ENCODE measurements at regions of chr4 and their contacts with region 1.

Region 1: GRCh38 chr4:163554870-163555465 is 60.5 kb downstream of the TMA16 start:
- DNase-seq: peak in 3 of 14 experiments; percentile 50 to 52 (median 52)
- ATAC-seq: no peak
- H3K4me3 ChIP-seq: no peak overlapping the region
- H3K4me3 Mint-ChIP-seq: no peak overlapping the region
- H3K27ac ChIP-seq: no peak overlapping the region
- H3K27ac Mint-ChIP-seq: no peak overlapping the region
- H3K4me1 ChIP-seq: peaks cover 22% of the 10 kb centered on the region
- H3K4me1 Mint-ChIP-seq: peaks cover 58% of the 10 kb centered on the region
- H3K27me3 ChIP-seq: no peaks in the 10 kb centered on the region
- H3K27me3 Mint-ChIP-seq: no peaks in the 10 kb centered on the region
- CTCF ChIP-seq: peak; percentile 94

Region 2: GRCh38 chr4:163582703-163583102 is 27.7 kb after region 1 on chr4:
- CTCF ChIA-PET with region 1: no interaction called
- POLR2A ChIA-PET with region 1: no interaction called
- intact Hi-C with region 1: loop called in 1 of 2 experiments (anchors 2 kb)
- DNase-seq: no peak
- ATAC-seq: no peak
- H3K4me3 ChIP-seq: no peak overlapping the region
- H3K4me3 Mint-ChIP-seq: no peak overlapping the region
- H3K27ac ChIP-seq: no peak overlapping the region
- H3K27ac Mint-ChIP-seq: no peak overlapping the region
- H3K4me1 ChIP-seq: no peaks in the 10 kb centered on the region
- H3K4me1 Mint-ChIP-seq: no peaks in the 10 kb centered on the region
- H3K27me3 ChIP-seq: no peaks in the 10 kb centered on the region
- H3K27me3 Mint-ChIP-seq: peaks cover 3% of the 10 kb centered on the region
- CTCF ChIP-seq: no peak

Region 3: DNA sequence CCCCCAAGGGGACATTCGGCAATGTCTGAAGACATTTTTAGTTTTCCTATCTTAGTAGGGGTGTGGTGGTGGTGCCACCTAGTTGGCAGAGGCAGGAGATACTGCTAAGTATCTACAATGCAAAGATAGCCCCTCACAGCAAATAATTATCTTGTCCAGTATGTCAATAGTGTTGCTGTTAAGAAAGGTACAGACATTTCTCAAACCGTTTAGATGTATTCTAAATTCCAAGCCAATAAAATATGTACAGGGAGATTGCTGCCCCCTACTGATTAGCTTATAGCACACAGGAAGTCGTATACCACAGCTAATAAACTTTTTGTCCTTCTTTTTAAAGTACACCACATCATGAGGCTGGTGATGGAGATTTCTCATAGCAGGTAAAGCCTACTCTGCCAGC is 200.0 kb after region 1 on chr4:
- CTCF ChIA-PET with region 1: interaction called, 5 read pairs
- POLR2A ChIA-PET with region 1: interaction called, 5 read pairs
- intact Hi-C with region 1: loop called (anchors 1 to 2 kb)
- DNase-seq: peak in 3 of 14 experiments; percentile 51 to 57 (median 52)
- ATAC-seq: peak; percentile 61
- H3K4me3 ChIP-seq: no peak overlapping the region
- H3K4me3 Mint-ChIP-seq: no peak overlapping the region
- H3K27ac ChIP-seq: no peak overlapping the region
- H3K27ac Mint-ChIP-seq: no peak overlapping the region
- H3K4me1 ChIP-seq: no peaks in the 10 kb centered on the region
- H3K4me1 Mint-ChIP-seq: peaks cover 9% of the 10 kb centered on the region
- H3K27me3 ChIP-seq: no peaks in the 10 kb centered on the region
- H3K27me3 Mint-ChIP-seq: peaks cover 7% of the 10 kb centered on the region
- CTCF ChIP-seq: peak; percentile 62

Region 4: DNA sequence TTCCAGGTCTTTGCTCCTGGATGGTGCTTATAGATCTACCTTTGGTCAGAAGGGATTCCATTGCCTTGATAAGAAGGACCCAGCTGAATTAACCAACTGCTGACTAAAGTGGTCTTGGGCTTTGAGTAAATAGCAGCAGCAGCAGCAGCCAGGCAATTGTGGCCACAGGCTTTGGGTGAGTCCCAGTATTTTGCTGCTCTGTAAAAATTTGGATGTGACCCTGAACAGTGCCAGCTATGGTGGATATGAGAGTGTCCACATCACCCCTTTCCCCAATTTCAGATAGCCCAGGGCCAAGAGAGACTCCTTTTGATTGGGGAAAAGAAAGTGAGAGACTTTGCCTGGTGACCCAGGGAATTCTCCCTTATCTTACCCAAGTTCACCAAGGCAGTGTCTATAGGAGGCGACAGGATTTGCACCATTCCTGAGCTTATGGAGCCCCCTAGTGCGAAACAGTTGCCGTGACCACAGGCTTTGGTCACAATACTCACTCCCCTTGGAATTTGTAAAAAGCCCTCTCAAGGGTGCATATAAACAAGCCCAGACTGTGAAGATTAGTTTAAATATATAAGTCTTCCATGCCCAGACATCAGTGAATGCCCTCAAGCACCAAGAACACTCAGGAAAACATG is 457.5 kb after region 1 on chr4:
- CTCF ChIA-PET with region 1: no interaction called
- POLR2A ChIA-PET with region 1: interaction called, 7 read pairs
- intact Hi-C with region 1: loop called (anchors 1 kb)
- DNase-seq: peak in 12 of 14 experiments; percentile 2 to 64 (median 14)
- ATAC-seq: peak; percentile 64
- H3K4me3 ChIP-seq: no peak overlapping the region
- H3K4me3 Mint-ChIP-seq: no peak overlapping the region
- H3K27ac ChIP-seq: no peak overlapping the region
- H3K27ac Mint-ChIP-seq: no peak overlapping the region
- H3K4me1 ChIP-seq: no peaks in the 10 kb centered on the region
- H3K4me1 Mint-ChIP-seq: peaks cover 21% of the 10 kb centered on the region
- H3K27me3 ChIP-seq: no peaks in the 10 kb centered on the region
- H3K27me3 Mint-ChIP-seq: no peaks in the 10 kb centered on the region
- CTCF ChIP-seq: peak; percentile 62

Region 5: GRCh38 chr4:164402554-164402953 is 847.6 kb after region 1 on chr4:
- CTCF ChIA-PET with region 1: no interaction called
- POLR2A ChIA-PET with region 1: no interaction called
- intact Hi-C with region 1: no loop called
- DNase-seq: no peak
- ATAC-seq: no peak
- H3K4me3 ChIP-seq: no peak overlapping the region
- H3K4me3 Mint-ChIP-seq: no peak overlapping the region
- H3K27ac ChIP-seq: no peak overlapping the region
- H3K27ac Mint-ChIP-seq: no peak overlapping the region
- H3K4me1 ChIP-seq: no peaks in the 10 kb centered on the region
- H3K4me1 Mint-ChIP-seq: no peaks in the 10 kb centered on the region
- H3K27me3 ChIP-seq: no peaks in the 10 kb centered on the region
- H3K27me3 Mint-ChIP-seq: no peaks in the 10 kb centered on the region
- CTCF ChIP-seq: no peak

Region 6: DNA sequence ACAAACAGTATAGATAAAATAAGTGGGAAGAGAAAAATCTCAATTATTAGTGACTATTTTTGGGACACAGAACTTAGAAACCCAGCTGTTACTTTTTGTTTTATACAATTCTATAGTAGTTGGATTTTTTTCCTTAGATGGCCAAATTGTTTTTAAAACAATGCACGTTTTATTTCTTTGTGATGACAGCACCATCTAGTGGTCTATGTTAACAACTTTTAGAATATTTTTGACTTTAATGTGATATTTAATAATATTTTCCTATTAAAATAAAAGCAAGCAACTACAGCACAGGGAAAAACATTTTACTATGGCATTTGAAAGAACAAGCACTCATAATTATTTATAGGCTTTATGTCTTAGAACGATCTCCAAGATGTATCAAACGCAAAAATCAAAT is 1193.4 kb after region 1 on chr4:
- CTCF ChIA-PET with region 1: no interaction called
- POLR2A ChIA-PET with region 1: no interaction called
- intact Hi-C with region 1: loop called (anchors 1 to 5 kb)
- DNase-seq: peak in 2 of 14 experiments; percentile 9 to 19
- ATAC-seq: no peak
- H3K4me3 ChIP-seq: no peak overlapping the region
- H3K4me3 Mint-ChIP-seq: no peak overlapping the region
- H3K27ac ChIP-seq: no peak overlapping the region
- H3K27ac Mint-ChIP-seq: no peak overlapping the region
- H3K4me1 ChIP-seq: no peaks in the 10 kb centered on the region
- H3K4me1 Mint-ChIP-seq: no peaks in the 10 kb centered on the region
- H3K27me3 ChIP-seq: no peaks in the 10 kb centered on the region
- H3K27me3 Mint-ChIP-seq: peaks cover 9% of the 10 kb centered on the region
- CTCF ChIP-seq: peak; percentile 45

Measured in CD4-positive, alpha-beta T cell (primary cell).